Panc1 (cell line): ENCODE measurements at regions of chr6 and their contacts with region 1.

Region 1: DNA sequence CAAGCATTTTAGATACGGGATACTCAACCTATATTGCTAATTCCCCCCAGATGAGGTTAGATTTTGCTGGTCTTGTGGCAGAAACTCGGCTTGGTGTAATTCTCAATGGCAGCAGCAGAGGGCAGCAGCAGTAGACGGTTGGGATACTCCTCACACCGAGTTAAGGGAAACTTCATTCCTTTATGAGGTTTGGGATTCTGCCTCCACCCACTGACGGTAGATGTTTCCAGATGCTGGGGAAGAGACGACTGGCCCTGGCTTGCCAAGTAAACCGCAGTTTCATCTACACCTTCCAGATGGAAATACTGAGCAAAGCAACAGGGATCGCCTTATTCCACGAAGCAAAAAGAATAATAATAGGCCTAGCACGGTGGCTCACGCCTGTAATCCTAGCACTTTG is 8.2 kb upstream of the TBC1D7 start:
- DNase-seq: peak; percentile 48
- ATAC-seq: peak; percentile 88
- H3K4me3 ChIP-seq: no peak overlapping the region
- H3K27ac ChIP-seq: no peak overlapping the region
- H3K4me1 ChIP-seq: no peaks in the 10 kb centered on the region
- H3K27me3 ChIP-seq: peaks cover 7% of the 10 kb centered on the region; the same call in 1 of the 2 replicates
- CTCF ChIP-seq: peak; percentile 90

Region 2: DNA sequence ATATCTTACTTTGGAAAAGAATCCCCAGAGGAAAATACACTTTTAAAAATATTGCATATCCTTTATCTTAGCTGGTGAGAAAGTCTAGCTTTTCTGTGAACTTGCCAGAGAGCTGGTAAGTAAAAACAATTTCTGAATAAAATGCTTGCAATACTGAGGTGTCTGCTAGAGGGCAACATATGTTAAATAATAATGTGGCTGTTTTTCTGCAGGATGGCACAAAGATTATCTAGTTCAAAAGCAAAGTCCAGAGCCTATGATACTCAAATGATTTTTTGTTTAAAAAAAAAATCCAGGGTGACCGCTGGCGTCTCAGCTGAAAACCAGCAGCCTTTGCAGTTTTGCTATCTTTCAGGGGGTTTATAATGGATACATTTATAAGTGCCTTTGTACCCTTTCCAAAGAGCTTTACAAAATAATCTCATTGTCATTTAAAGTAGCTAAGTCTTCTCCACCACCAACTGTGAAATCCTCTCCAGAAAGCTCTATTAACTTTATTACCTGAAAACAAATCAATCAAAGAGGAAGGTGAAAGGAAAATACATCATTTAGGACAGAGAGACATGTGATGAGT is 425.1 kb before region 1 on chr6:
- CTCF ChIA-PET with region 1: no interaction called
- POLR2A ChIA-PET with region 1: no interaction called
- in situ Hi-C with region 1: no loop called
- intact Hi-C with region 1: loop called (anchors 10 kb)
- DNase-seq: no peak
- ATAC-seq: no peak
- H3K4me3 ChIP-seq: no peak overlapping the region
- H3K27ac ChIP-seq: no peak overlapping the region
- H3K4me1 ChIP-seq: no peaks in the 10 kb centered on the region
- H3K27me3 ChIP-seq: no peaks in the 10 kb centered on the region
- CTCF ChIP-seq: peak; percentile 53; the same call in 1 of the 2 replicates

Region 3: GRCh38 chr6:13538084-13538483 is 201.5 kb after region 1 on chr6:
- CTCF ChIA-PET with region 1: no interaction called
- POLR2A ChIA-PET with region 1: no interaction called
- in situ Hi-C with region 1: no loop called
- intact Hi-C with region 1: loop called (anchors 5 kb)
- DNase-seq: no peak
- ATAC-seq: no peak
- H3K4me3 ChIP-seq: no peak overlapping the region
- H3K27ac ChIP-seq: no peak overlapping the region
- H3K4me1 ChIP-seq: no peaks in the 10 kb centered on the region
- H3K27me3 ChIP-seq: peaks cover 2% of the 10 kb centered on the region
- CTCF ChIP-seq: peak; percentile 41; the same call in 1 of the 2 replicates

Region 4: GRCh38 chr6:13574149-13574570 is 237.6 kb after region 1 on chr6:
- CTCF ChIA-PET with region 1: interaction called, 5 read pairs
- POLR2A ChIA-PET with region 1: no interaction called
- in situ Hi-C with region 1: no loop called
- intact Hi-C with region 1: loop called (anchors 10 kb)
- DNase-seq: peak; percentile 69
- ATAC-seq: peak; percentile 92
- H3K4me3 ChIP-seq: peak overlapping the region; percentile 73 to 88
- H3K27ac ChIP-seq: peak overlapping the region; percentile 90; the same call in 1 of the 2 replicates
- H3K4me1 ChIP-seq: peaks cover 11% of the 10 kb centered on the region; the same call in 1 of the 2 replicates
- H3K27me3 ChIP-seq: no peaks in the 10 kb centered on the region
- CTCF ChIP-seq: peak; percentile 75

Region 5: GRCh38 chr6:13581700-13582229 is 245.2 kb after region 1 on chr6:
- CTCF ChIA-PET with region 1: no interaction called
- POLR2A ChIA-PET with region 1: interaction called, 10 read pairs
- in situ Hi-C with region 1: no loop called
- intact Hi-C with region 1: loop called (anchors 10 kb)
- DNase-seq: no peak
- ATAC-seq: no peak
- H3K4me3 ChIP-seq: no peak overlapping the region
- H3K27ac ChIP-seq: no peak overlapping the region
- H3K4me1 ChIP-seq: no peaks in the 10 kb centered on the region
- H3K27me3 ChIP-seq: no peaks in the 10 kb centered on the region
- CTCF ChIP-seq: no peak